ENCODE measurements at regions of chr20 and their contacts with region 1.

Region 1: GRCh38 chr20:32779500-32780211 is 17.5 kb downstream of the DNMT3B start:
- DNase-seq: no peak
- CTCF ChIP-seq: no peak

Region 2: GRCh38 chr20:32509639-32510066 is 270.0 kb before region 1 on chr20:
- CTCF ChIA-PET with region 1: no interaction called
- POLR2A ChIA-PET with region 1: no interaction called
- DNase-seq: no peak
- CTCF ChIP-seq: peak; percentile 18

Region 3: GRCh38 chr20:32521780-32522525 is 257.7 kb before region 1 on chr20:
- CTCF ChIA-PET with region 1: interaction called, 28 read pairs
- POLR2A ChIA-PET with region 1: no interaction called
- DNase-seq: peak; percentile 79
- CTCF ChIP-seq: peak; percentile 85

Region 4: DNA sequence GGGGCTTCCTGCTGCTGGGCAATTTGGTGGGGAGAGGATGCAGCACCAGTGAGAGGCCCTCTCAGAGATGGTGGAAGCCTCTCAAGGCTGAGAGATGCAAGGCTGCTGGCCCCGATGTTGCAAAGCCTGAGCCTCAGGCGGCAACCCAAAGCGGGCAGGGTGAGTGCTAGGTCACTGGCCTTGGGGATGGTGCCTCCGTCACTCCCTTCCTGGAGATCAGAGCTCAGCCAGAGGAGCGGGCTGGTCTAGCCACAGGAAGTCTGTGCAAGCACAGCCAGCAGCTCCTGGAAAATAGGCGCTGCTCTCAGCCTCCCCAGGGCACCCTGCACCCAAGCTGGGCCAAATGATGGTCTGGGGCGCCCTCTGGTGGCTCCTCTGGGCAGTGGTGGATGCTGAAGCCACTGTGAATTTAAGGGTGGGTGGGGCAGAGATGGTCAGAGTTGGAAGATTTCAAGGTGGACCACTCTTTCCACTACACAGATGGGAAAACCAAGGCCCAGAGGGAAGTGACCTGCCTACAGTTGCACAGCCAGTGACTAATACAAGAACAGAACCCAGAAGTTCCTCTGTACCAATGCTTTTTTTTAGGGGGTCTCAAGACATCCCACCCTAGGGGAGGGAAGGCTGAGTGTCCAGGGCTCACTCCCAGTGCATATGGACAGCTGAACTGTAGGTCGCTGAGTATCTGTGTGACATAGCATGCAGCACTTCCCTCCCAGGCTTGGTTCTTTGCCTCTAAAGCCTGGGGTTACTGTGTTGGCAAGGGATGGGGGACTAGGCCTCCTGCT is 126.7 kb before region 1 on chr20:
- CTCF ChIA-PET with region 1: interaction called, 18 read pairs
- POLR2A ChIA-PET with region 1: no interaction called
- DNase-seq: peak; percentile 88
- CTCF ChIP-seq: peak; percentile 95

Region 5: GRCh38 chr20:32674362-32674789 is 105.3 kb before region 1 on chr20:
- CTCF ChIA-PET with region 1: interaction called, 224 read pairs
- POLR2A ChIA-PET with region 1: no interaction called
- DNase-seq: peak; percentile 78
- CTCF ChIP-seq: peak; percentile 73

Region 6: DNA sequence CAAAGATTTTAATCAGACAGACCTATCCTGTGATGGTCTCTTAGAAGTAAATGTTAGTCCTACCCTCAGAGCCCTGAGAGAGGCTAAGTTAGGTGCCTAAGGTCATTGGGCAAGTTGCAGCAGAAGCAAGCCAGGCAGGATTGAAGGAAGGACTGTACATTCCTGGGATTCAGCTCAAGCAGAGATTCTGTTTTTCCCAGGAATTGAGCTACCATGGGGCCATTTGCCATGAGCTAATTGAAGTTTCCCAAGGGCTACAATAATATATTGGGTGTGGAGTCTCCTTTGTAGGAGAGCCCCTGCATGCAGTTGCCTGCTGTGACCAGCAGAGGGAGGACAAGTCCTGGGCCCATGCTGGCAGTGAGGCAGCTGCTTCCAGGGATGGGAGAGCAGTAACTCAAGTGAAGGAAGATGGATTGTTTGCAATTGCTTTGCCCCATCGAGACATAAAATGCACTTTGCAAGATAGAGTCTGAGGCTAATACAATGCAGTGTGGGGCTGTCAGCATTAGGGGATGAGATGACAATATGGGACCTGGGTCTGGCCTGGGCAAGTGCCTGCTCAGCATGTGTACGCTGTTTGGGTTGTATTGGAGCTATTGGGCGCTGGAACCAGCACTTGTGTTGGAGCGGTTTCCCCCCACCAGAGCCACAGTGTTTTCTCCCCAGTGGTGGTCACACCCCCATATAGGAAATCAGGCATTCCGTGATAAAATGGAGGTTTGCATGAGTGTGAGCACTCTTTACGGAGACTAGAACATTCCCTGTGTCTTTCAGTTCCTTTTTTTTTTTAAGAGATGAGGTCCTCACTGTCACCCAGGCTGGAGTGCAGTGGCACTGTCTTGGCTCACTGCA is 10.5 kb after region 1 on chr20:
- CTCF ChIA-PET with region 1: interaction called, 53 read pairs
- POLR2A ChIA-PET with region 1: no interaction called
- DNase-seq: peak; percentile 87
- CTCF ChIP-seq: peak; percentile 99

Region 7: GRCh38 chr20:32806356-32806755 is 26.7 kb after region 1 on chr20:
- CTCF ChIA-PET with region 1: interaction called, 13 read pairs
- POLR2A ChIA-PET with region 1: no interaction called
- DNase-seq: no peak
- CTCF ChIP-seq: no peak

Region 8: GRCh38 chr20:32966881-32967781 is 187.5 kb after region 1 on chr20:
- CTCF ChIA-PET with region 1: no interaction called
- POLR2A ChIA-PET with region 1: no interaction called
- DNase-seq: peak; percentile 21
- CTCF ChIP-seq: no peak

Measured in GM10248 (cell line).